ENCODE measurements at regions of chr1 and their contacts with region 1.

Region 1: GRCh38 chr1:189859385-189859977 is 618.2 kb downstream of the BRINP3 start:
- DNase-seq: no peak
- ATAC-seq: peak; percentile 86
- H3K4me3 ChIP-seq: no peak overlapping the region
- H3K27ac ChIP-seq: no peak overlapping the region
- H3K4me1 ChIP-seq: no peaks in the 10 kb centered on the region
- H3K27me3 ChIP-seq: no peaks in the 10 kb centered on the region
- CTCF ChIP-seq: peak; percentile 63 to 81 (median 78)
- EP300 ChIP-seq: no peak
- POLR2A ChIP-seq: no peak
- RAD21 ChIP-seq: peak; percentile 52

Region 2: GRCh38 chr1:189834813-189835212 is 24.7 kb before region 1 on chr1:
- CTCF ChIA-PET with region 1: no interaction called
- POLR2A ChIA-PET with region 1: no interaction called
- RAD21 ChIA-PET with region 1: no interaction called
- SMC1A ChIA-PET with region 1: no interaction called
- in situ Hi-C with region 1: no loop called
- intact Hi-C with region 1: no loop called
- DNase-seq: no peak
- ATAC-seq: no peak
- H3K4me3 ChIP-seq: no peak overlapping the region
- H3K27ac ChIP-seq: no peak overlapping the region
- H3K4me1 ChIP-seq: no peaks in the 10 kb centered on the region
- H3K27me3 ChIP-seq: no peaks in the 10 kb centered on the region
- CTCF ChIP-seq: no peak
- EP300 ChIP-seq: no peak
- POLR2A ChIP-seq: no peak
- RAD21 ChIP-seq: no peak

Region 3: DNA sequence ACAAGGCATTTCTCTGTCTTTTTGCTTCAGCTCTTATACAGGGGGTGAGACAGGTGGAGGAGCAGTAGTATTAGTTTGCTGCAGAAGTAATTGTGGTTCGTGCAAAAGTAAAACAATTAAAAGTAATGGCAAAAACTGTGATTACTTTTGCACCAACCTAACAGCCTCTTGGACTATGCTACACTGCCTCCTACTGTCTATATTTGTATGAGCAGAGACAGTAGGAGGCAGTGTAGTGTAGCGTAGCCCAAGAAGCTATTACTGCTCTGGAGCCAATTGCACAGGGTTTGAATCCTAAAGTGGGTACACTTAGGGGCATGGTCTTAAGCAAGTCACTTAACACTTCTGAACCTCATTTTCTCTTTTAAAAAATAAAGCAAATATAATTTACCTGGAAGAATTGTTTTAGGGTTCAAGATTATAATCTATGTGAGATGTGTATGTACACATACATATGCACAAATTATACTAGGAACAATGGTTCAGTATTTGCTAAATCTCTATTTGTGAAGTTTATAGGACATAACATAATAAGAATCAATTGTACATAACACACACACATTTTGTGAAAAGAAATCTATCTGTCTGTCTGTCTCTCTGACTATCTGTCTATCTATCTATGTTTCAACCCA is 514.3 kb after region 1 on chr1:
- CTCF ChIA-PET with region 1: interaction called, 5 read pairs
- POLR2A ChIA-PET with region 1: no interaction called
- RAD21 ChIA-PET with region 1: no interaction called
- SMC1A ChIA-PET with region 1: no interaction called
- in situ Hi-C with region 1: no loop called
- intact Hi-C with region 1: loop called (anchors 1 kb)
- DNase-seq: no peak
- ATAC-seq: peak; percentile 92
- H3K4me3 ChIP-seq: no peak overlapping the region
- H3K27ac ChIP-seq: no peak overlapping the region
- H3K4me1 ChIP-seq: no peaks in the 10 kb centered on the region; the same call in 1 of the 2 replicates
- H3K27me3 ChIP-seq: no peaks in the 10 kb centered on the region
- CTCF ChIP-seq: peak; percentile 53 to 70 (median 56); a peak in 5 of 6 replicates
- EP300 ChIP-seq: no peak
- POLR2A ChIP-seq: no peak
- RAD21 ChIP-seq: peak; percentile 77

Region 4: DNA sequence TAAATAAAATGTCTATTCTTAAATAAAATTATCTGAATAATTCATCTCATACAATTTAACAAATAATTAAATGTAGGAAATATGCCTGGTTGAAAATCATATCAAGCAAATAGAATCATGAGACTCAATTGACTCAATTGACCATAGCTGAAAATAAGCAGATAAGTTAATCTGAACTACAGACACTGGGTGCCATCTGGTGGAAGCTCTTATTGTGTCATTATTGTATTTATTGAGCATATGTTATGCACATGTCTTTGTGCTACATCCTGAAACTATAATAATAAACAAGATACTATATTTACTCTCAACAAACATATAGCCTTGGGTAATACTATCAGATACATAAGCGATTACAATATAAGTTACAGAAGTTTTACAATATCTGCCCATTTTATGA is 577.1 kb after region 1 on chr1:
- CTCF ChIA-PET with region 1: interaction called, 4 read pairs
- POLR2A ChIA-PET with region 1: no interaction called
- RAD21 ChIA-PET with region 1: no interaction called
- SMC1A ChIA-PET with region 1: no interaction called
- in situ Hi-C with region 1: no loop called
- intact Hi-C with region 1: loop called (anchors 5 kb)
- DNase-seq: peak; percentile 5
- ATAC-seq: peak; percentile 57; the same call in 2 of the 3 replicates
- H3K4me3 ChIP-seq: no peak overlapping the region
- H3K27ac ChIP-seq: no peak overlapping the region
- H3K4me1 ChIP-seq: no peaks in the 10 kb centered on the region
- H3K27me3 ChIP-seq: no peaks in the 10 kb centered on the region
- CTCF ChIP-seq: peak in 1 of 3 experiments; percentile 46; a peak in 1 of 6 replicates
- EP300 ChIP-seq: no peak
- POLR2A ChIP-seq: no peak
- RAD21 ChIP-seq: peak; percentile 57

Measured in GM12878 (cell line).